ENCODE measurements at regions of chr1 and their contacts with region 1.

Region 1: DNA sequence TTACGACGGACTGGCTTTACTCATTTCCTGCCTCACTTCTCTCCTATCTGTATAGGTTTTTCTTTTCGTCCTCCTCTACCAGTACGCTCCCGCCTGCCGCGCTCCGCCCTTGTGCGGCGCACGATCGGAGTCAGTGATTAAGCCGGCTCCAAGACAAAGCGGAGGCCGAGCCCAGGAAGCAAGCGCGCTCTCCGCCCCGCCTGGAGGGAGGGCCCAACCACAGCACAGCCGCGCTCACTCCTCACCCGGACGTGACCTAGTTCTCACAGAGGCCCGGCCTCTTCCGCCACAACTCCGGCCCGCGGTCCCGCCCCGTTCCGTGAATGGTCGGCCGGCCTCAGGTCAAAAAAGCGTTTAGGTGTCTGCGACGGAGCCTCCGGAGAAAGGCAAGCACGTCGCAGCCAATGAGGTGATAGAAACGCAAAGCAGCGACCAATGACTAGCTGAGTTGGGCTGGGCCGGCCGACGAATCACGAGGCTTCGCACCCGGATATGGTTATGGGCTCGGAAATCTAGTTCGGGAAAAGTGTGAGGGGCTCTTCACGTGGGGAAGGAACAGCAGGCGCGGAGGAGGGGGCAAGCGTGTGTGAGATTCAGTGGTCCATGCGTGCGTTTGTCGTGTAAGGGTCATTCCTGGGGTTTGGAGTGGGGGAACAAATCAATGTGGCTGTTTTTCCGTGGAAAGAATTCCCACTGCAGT is at the start of gene METTL13:
- DNase-seq: peak; percentile 99
- H3K4me3 Mint-ChIP-seq: peak within 1 kb of the TSS; percentile 93
- H3K27ac Mint-ChIP-seq: peak within 1 kb of the TSS; percentile 92
- H3K4me1 Mint-ChIP-seq: peaks cover 36% of the 10 kb centered on the region
- H3K27me3 Mint-ChIP-seq: no peaks in the 10 kb centered on the region
- total RNA-seq, gene METTL13: 50.0 and 53.6 TPM in 2 replicates

Region 2: DNA sequence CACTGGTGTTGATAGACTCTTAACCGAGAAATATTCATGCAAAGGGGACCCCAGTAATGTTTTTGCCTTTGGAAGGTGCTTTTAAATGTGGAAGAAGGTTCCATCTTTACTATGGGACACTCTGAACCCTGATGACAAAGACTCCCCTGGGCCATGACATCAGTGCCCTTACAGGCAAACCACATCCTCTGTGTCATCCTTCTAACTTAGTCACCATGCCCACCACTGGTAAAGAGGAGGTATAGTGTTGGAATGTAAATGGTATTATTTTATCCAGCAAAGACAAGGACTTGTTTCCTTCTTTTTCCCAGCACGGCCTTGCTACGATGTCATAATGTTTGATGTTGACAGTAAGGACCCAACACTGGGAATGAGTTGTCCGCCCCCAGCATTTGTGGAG is 12.8 kb after region 1 on chr1:
- intact Hi-C with region 1: loop called (anchors 1 kb)
- DNase-seq: peak; percentile 32
- H3K4me3 Mint-ChIP-seq: peak overlapping the region; percentile 28
- H3K27ac Mint-ChIP-seq: peak overlapping the region; percentile 92
- H3K4me1 Mint-ChIP-seq: peaks cover 20% of the 10 kb centered on the region
- H3K27me3 Mint-ChIP-seq: no peaks in the 10 kb centered on the region

Region 3: DNA sequence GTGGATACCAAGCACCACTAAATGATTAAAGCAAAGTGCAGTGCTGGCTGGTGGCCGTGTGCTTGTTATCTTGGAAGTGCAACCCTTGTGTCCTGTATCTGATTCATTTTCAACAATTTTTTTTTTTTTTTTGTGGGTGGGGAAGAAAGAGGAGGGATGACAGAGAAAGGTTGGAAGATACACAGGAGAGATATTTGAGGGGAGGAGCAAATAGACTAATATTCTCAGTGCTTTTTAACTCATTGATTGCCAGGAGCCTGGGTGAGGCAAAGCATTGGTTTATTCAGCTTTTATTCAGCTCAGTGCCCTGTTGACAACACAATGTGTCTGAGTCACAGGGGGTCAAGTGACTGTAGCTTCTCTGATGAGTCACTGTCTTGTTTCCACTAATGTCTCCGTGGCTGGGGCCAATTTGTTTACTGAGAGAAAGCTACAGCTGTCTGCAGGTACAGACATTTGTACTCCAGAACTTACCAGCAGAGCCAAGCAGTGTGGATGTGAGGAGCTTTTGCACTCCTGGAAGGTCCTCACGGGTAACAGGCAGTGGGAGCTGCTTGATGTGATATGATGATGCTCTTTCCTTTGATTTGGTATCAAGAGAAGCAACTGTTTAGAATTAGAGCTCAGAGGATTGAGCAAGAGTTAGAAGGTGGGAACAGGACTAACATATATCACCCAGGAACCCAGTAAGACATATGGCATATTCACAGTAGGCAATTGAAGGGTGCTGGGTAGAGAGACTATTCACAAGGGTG is 36.4 kb after region 1 on chr1:
- intact Hi-C with region 1: loop called (anchors 1 kb)
- DNase-seq: peak; percentile 20
- H3K4me3 Mint-ChIP-seq: no peak overlapping the region
- H3K27ac Mint-ChIP-seq: peak overlapping the region; percentile 80
- H3K4me1 Mint-ChIP-seq: peaks cover 18% of the 10 kb centered on the region
- H3K27me3 Mint-ChIP-seq: no peaks in the 10 kb centered on the region

Region 4: GRCh38 chr1:171841050-171841940 is 60.0 kb after region 1 on chr1 and contains the start of gene DNM3:
- intact Hi-C with region 1: loop called (anchors 1 kb)
- DNase-seq: peak; percentile 76
- H3K4me3 Mint-ChIP-seq: peak within 1 kb of the TSS; percentile 85
- H3K27ac Mint-ChIP-seq: peak within 1 kb of the TSS; percentile 67
- H3K4me1 Mint-ChIP-seq: peaks cover 14% of the 10 kb centered on the region
- H3K27me3 Mint-ChIP-seq: peaks cover 43% of the 10 kb centered on the region
- total RNA-seq, gene DNM3: 0.37 and 0.41 TPM in 2 replicates